ENCODE measurements at regions of chr5 and their contacts with region 1.

Region 1: DNA sequence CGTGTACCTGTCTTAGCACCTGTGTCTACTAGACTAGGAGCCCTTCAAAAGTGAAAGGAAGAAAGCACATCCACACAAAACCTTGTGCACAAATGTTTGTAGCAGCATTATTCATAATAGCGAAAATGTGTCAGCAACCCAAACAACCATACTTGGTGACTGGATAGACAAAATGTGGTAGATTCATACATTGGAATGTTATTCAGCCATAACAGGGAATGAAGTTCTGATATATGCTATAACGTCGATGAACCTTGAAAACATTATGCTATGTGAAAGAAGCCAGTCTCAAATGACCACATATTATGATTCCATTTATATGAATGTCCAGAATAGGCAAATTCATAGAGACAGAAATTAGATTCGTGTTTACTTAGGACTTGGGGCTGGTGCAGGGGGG is 57.8 kb upstream of the LARP1 start:
- DNase-seq: no peak
- H3K4me3 ChIP-seq: no peak overlapping the region
- H3K27ac ChIP-seq: no peak overlapping the region
- H3K4me1 ChIP-seq: peaks cover 19% of the 10 kb centered on the region
- H3K27me3 ChIP-seq: no peaks in the 10 kb centered on the region
- CTCF ChIP-seq: no peak

Region 2: DNA sequence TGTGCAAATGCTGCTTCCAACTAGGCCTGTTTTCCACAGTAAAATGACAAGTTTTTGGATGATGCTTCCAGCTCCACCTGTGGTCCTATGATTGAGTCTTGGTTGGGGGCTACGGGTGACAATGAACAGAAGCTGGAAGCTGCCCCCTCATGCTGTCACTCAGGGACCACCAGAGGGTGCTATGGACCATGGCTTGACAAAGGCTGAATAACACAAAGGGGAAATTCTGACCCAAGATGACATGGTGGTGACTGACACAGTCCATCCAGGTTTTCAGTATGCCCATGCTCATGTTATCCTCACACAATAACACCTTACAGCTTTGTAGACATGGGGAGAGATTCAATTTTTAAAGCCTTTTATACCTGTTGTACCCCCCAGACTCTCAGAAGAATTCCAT is 275.5 kb before region 1 on chr5:
- CTCF ChIA-PET with region 1: no interaction called
- POLR2A ChIA-PET with region 1: interaction called, 12 read pairs
- intact Hi-C with region 1: no loop called
- DNase-seq: no peak
- H3K4me3 ChIP-seq: no peak overlapping the region
- H3K27ac ChIP-seq: no peak overlapping the region
- H3K4me1 ChIP-seq: no peaks in the 10 kb centered on the region
- H3K27me3 ChIP-seq: no peaks in the 10 kb centered on the region
- CTCF ChIP-seq: peak; percentile 56; the same call in 1 of the 2 replicates

Region 3: GRCh38 chr5:154754460-154755360 is 57.3 kb after region 1 on chr5:
- CTCF ChIA-PET with region 1: no interaction called
- POLR2A ChIA-PET with region 1: no interaction called
- intact Hi-C with region 1: loop called (anchors 1 kb)
- DNase-seq: peak; percentile 96 to 100
- H3K4me3 ChIP-seq: peak overlapping the region; percentile 77
- H3K27ac ChIP-seq: peak overlapping the region; percentile 95
- H3K4me1 ChIP-seq: peaks cover 33% of the 10 kb centered on the region
- H3K27me3 ChIP-seq: no peaks in the 10 kb centered on the region
- CTCF ChIP-seq: no peak; the same call in 1 of the 2 replicates

Measured in PC-9 (cell line).